A673 (cell line): ENCODE measurements at regions of chr9 and their contacts with region 1.

Region 1: DNA sequence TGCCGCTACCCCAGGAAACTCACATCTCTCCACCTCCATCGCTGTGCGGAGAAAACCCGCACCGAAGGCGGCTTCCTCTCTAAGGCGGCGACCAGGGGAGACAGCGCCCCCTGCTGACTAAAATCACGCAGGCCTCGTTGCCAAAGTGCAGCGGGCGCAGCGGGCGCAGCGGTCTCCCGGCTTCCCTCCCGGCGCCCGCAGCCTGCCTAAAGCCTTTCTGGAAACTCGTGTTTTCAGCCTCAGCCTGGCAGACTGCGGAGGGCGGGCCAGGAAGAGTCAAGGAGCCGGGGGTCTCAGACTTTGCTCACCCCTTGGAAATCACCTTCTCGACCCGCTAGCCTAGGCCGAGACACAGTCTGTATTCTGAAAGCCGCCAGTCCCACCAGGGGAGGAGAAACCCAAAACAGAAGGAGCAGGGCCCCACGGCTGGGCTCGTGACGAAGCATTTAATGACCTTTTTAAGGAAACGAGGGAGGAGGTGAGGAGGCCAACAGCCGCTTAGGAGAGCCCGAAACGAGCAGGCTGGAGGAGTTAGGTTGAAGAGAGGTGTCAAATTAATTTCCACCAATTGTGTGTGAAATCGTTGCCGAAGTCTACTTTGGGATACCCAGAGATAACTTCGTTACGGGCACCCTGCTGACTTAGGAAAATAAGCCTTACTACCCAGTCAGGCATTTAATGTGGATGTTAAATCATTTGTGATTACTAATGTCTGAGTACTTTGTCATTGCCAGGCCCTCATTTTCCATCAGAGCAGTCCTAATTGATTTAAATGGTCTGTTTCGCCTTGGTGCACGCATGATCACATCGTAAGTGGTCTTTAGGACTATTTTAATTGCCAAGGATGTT is 7.3 kb upstream of the FOXB2 start:
- DNase-seq: peak; percentile 81
- H3K4me3 ChIP-seq: peak overlapping the region; percentile 30
- H3K27ac ChIP-seq: no peak overlapping the region
- H3K4me1 ChIP-seq: peaks cover 5% of the 10 kb centered on the region
- H3K27me3 ChIP-seq: peaks cover 88% of the 10 kb centered on the region
- CTCF ChIP-seq: peak; percentile 97

Region 2: GRCh38 chr9:76761448-76761847 is 250.7 kb before region 1 on chr9:
- CTCF ChIA-PET with region 1: no interaction called
- POLR2A ChIA-PET with region 1: no interaction called
- intact Hi-C with region 1: loop called (anchors 5 kb)
- DNase-seq: peak; percentile 2
- H3K4me3 ChIP-seq: no peak overlapping the region
- H3K27ac ChIP-seq: no peak overlapping the region
- H3K4me1 ChIP-seq: no peaks in the 10 kb centered on the region
- H3K27me3 ChIP-seq: no peaks in the 10 kb centered on the region
- CTCF ChIP-seq: peak; percentile 50

Region 3: DNA sequence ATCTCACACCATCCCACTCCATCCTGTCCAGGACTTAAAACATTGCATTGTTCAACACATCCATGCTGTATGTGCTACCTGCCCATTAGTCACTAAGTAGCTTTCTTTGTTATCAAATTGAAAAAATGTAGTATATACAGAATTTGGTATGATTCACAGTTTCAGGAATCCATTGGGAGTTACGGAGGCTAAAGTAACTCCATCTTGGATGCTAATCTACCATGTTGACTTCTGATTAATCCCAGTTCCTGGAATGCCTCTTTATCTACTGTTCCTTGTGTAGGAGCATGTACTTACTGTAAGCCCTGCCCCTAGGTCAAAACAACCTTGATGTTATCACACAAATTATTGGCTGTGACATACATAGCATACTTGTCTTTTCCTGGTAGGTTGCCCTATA is 31.6 kb before region 1 on chr9:
- CTCF ChIA-PET with region 1: no interaction called
- POLR2A ChIA-PET with region 1: no interaction called
- intact Hi-C with region 1: no loop called
- DNase-seq: no peak
- H3K4me3 ChIP-seq: no peak overlapping the region
- H3K27ac ChIP-seq: no peak overlapping the region
- H3K4me1 ChIP-seq: no peaks in the 10 kb centered on the region
- H3K27me3 ChIP-seq: peaks cover 65% of the 10 kb centered on the region
- CTCF ChIP-seq: no peak